ENCODE measurements at regions of chr16 and their contacts with region 1.

Region 1: DNA sequence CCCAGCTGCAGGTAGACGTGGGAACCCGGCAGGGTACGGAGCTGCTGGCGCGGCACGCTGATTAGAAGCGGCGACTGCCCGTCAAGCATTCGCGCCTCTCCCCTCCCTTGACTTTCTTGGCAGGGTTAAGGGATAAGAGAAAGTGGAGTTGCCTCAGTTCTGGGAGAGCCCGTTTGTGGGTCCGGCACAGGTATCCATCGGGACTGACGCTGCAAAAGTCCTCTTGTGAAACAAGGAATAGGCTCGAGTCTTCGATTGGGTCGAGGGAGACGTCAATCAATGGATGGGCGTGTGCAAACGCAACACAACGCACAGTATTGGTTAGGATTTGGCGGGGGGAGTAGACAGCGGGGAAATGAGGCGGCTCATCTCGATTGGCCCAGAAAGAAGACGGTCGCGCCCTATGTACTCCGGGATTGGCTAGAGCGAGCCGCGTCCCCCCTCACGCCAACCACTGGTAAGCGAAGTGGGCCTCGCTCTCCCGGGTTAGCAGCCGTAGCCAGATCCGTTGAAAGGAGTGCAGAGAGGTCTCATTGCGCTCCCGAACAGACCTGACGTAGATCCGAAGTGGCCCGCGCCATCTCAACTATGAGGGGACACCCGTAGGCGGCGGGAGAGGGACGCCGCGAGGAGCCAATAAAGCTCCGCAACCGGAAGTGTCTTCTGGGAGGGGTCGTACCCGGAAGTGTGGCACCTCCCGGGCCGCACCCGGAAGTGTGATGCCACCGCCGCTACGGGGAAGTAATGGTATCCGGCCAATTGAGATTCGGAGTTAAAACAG is at the start of gene MON1B:
- DNase-seq: peak; percentile 83
- ATAC-seq: peak; percentile 96
- H3K4me3 Mint-ChIP-seq: peak within 1 kb of the TSS; percentile 99
- H3K27ac Mint-ChIP-seq: peak within 1 kb of the TSS; percentile 100
- H3K4me1 Mint-ChIP-seq: peaks cover 43% of the 10 kb centered on the region
- H3K27me3 Mint-ChIP-seq: no peaks in the 10 kb centered on the region
- CTCF ChIP-seq: no peak
- total RNA-seq, gene MON1B: 70.7 and 73.2 TPM in 2 replicates

Region 2: GRCh38 chr16:75566040-75566810 is 1624.4 kb before region 1 on chr16 and contains the start of gene GABARAPL2:
- CTCF ChIA-PET with region 1: no interaction called
- POLR2A ChIA-PET with region 1: no interaction called
- intact Hi-C with region 1: loop called (anchors 1 kb)
- DNase-seq: peak; percentile 98
- ATAC-seq: peak; percentile 69
- H3K4me3 Mint-ChIP-seq: peak within 1 kb of the TSS; percentile 100
- H3K27ac Mint-ChIP-seq: peak within 1 kb of the TSS; percentile 98
- H3K4me1 Mint-ChIP-seq: peaks cover 57% of the 10 kb centered on the region
- H3K27me3 Mint-ChIP-seq: no peaks in the 10 kb centered on the region
- CTCF ChIP-seq: no peak
- total RNA-seq, gene GABARAPL2: 62.9 and 69.4 TPM in 2 replicates

Region 3: GRCh38 chr16:77028655-77029054 is 162.0 kb before region 1 on chr16:
- CTCF ChIA-PET with region 1: no interaction called
- POLR2A ChIA-PET with region 1: no interaction called
- intact Hi-C with region 1: no loop called
- DNase-seq: no peak
- ATAC-seq: no peak
- H3K4me3 Mint-ChIP-seq: no peak overlapping the region
- H3K27ac Mint-ChIP-seq: no peak overlapping the region
- H3K4me1 Mint-ChIP-seq: no peaks in the 10 kb centered on the region
- H3K27me3 Mint-ChIP-seq: no peaks in the 10 kb centered on the region
- CTCF ChIP-seq: no peak

Region 4: DNA sequence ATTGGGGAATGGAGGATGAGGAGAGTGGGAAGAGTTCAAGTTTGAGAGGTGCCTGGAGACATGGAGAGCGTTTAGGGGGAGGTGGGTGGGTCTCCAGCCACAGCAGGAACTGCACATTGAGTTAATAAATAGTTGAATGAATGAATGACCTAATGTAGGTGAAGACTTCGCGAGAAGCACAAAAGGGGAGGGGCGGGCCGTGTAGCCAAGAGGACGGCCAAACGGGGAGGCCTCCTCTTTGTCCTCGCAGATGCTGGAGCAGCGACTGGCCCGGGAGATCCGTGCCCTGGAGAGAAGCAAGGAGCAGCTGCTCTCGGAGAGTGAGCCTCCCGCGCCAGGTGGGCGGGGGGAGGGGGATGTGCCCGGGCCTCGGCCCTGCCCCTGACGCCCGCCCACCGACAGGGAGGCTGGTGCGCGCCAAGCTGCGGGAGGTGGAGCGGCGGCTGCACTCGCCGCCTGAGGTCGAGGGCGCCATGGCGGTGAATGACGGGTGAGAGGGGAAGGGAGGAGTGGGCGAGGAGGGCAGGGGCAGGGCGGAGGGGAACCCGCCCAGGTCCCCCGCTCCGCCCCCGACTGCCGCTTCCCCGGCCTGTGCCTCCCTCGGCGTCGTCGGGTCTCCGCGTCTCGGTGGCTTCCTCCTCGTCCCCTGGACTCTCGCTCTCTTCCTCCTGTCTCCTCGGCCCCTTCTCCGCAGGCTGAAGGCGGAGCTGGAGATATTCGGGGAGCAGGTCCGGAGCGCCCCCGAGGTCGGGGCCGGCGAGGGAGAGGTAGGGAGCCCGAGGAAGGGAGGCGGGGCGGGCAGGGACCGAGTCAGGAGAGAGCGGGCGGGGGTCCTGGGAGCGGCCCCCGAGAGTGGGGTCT is 21.4 kb after region 1 on chr16:
- CTCF ChIA-PET with region 1: no interaction called
- POLR2A ChIA-PET with region 1: interaction called, 20 read pairs
- intact Hi-C with region 1: loop called (anchors 1 kb)
- DNase-seq: peak; percentile 63
- ATAC-seq: peak; percentile 71
- H3K4me3 Mint-ChIP-seq: peak overlapping the region; percentile 89
- H3K27ac Mint-ChIP-seq: peak overlapping the region; percentile 37
- H3K4me1 Mint-ChIP-seq: peaks cover 9% of the 10 kb centered on the region
- H3K27me3 Mint-ChIP-seq: no peaks in the 10 kb centered on the region
- CTCF ChIP-seq: no peak

Region 5: GRCh38 chr16:77722309-77723107 is 531.8 kb after region 1 on chr16 and contains the start of gene NUDT7:
- CTCF ChIA-PET with region 1: no interaction called
- POLR2A ChIA-PET with region 1: interaction called, 3 read pairs
- intact Hi-C with region 1: loop called (anchors 1 kb)
- DNase-seq: peak; percentile 93
- ATAC-seq: peak; percentile 98
- H3K4me3 Mint-ChIP-seq: peak within 1 kb of the TSS; percentile 90
- H3K27ac Mint-ChIP-seq: peak within 1 kb of the TSS; percentile 88
- H3K4me1 Mint-ChIP-seq: peaks cover 10% of the 10 kb centered on the region
- H3K27me3 Mint-ChIP-seq: no peaks in the 10 kb centered on the region
- CTCF ChIP-seq: no peak
- total RNA-seq, gene NUDT7: 4.0 and 4.7 TPM in 2 replicates

Measured in activated B cell treated with CpG ODN at 0.5 μM for 24 hours (primary cell).